ENCODE measurements at regions of chr7 and their contacts with region 1.

Region 1: GRCh38 chr7:158646766-158647447 is 57.7 kb downstream of the NCAPG2 start:
- DNase-seq: peak; percentile 12
- ATAC-seq: peak; percentile 69; the same call in 1 of the 2 replicates
- H3K4me3 ChIP-seq: no peak overlapping the region
- H3K27ac ChIP-seq: no peak overlapping the region
- H3K4me1 ChIP-seq: no peaks in the 10 kb centered on the region
- H3K27me3 ChIP-seq: no peaks in the 10 kb centered on the region
- CTCF ChIP-seq: peak; percentile 81

Region 2: GRCh38 chr7:158394936-158395335 is 252.0 kb before region 1 on chr7:
- CTCF ChIA-PET with region 1: no interaction called
- POLR2A ChIA-PET with region 1: no interaction called
- in situ Hi-C with region 1: no loop called
- intact Hi-C with region 1: no loop called
- DNase-seq: no peak
- ATAC-seq: no peak; the same call in 1 of the 2 replicates
- H3K4me3 ChIP-seq: no peak overlapping the region
- H3K27ac ChIP-seq: no peak overlapping the region
- H3K4me1 ChIP-seq: peaks cover 7% of the 10 kb centered on the region; the same call in 1 of the 2 replicates
- H3K27me3 ChIP-seq: no peaks in the 10 kb centered on the region
- CTCF ChIP-seq: peak; percentile 89

Region 3: DNA sequence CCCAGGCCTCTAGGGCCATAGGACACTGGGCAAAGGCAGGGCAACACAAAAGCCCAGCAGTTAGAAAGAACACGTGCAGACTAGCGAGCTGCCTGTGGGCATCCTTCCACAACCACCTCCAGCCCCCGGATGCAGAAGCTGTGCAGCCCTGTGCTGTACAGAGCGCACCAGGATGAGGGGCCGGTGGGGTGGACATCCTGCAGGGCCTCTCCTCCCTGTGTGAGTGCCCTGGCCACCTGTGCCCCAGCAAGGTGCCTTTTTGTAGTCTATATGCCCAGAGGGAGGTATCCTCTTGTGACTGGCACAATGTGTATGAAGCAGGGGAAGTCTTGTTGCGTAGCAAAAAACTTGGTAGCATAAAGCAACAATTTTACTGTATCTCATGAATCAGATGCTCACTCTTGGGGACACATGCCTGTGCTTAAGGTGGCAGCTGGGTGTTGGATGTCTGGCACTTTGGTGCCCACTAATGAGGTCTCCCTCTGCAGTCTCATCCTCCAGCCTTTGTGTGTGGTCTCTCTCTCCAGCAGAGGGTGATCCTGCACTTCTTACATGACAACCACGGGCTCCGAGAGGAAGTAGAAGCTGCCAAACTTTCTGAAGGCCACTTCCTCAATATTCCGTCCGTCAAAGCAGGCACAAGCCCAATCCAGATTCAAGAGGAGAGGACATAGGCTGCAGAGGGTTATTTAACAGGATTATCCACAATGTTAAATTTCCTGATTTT is 49.0 kb after region 1 on chr7:
- CTCF ChIA-PET with region 1: no interaction called
- POLR2A ChIA-PET with region 1: interaction called, 12 read pairs
- in situ Hi-C with region 1: no loop called
- intact Hi-C with region 1: no loop called
- DNase-seq: no peak
- ATAC-seq: peak; percentile 83
- H3K4me3 ChIP-seq: no peak overlapping the region
- H3K27ac ChIP-seq: no peak overlapping the region
- H3K4me1 ChIP-seq: no peaks in the 10 kb centered on the region
- H3K27me3 ChIP-seq: no peaks in the 10 kb centered on the region
- CTCF ChIP-seq: peak; percentile 48

Measured in Panc1 (cell line).